ENCODE measurements at regions of chr12 and their contacts with region 1.

Region 1: DNA sequence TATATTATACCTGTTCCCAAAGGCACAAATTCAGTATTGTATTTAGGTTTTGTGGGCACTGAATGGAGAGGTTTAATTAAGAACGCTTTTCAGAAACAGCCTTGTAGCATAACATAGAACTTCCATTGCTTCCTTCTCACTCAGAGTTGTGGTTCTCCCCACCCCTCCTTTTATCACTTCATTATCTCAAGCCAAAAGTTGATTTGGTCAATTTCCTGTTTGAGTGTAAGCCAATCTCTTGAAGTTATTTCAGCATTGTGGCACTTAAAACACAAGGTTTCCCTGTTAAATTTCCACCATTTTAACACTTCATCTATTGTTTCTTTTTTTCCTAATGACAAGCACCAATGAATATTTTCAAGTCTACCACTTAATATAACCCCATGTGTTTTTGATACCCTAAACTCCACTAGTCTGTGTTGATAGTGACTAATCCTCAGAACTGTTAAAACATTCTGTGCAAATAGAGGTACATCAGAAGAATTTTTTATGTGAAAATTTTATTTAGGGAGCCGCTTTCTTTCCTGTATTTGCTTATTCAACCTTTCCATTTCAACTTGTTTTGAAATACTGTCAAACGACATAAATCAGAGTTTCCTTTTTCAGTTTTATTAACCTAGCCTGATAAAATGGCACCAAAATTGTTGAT is 340.1 kb downstream of the BCAT1 start:
- DNase-seq: no peak
- ATAC-seq: no peak
- H3K4me3 Mint-ChIP-seq: no peak overlapping the region
- H3K27ac Mint-ChIP-seq: no peak overlapping the region
- H3K4me1 Mint-ChIP-seq: peaks cover 25% of the 10 kb centered on the region
- H3K27me3 Mint-ChIP-seq: no peaks in the 10 kb centered on the region
- CTCF ChIP-seq: no peak

Region 2: GRCh38 chr12:24649634-24650033 is 40.9 kb after region 1 on chr12:
- CTCF ChIA-PET with region 1: no interaction called
- POLR2A ChIA-PET with region 1: no interaction called
- intact Hi-C with region 1: loop called (anchors 5 kb)
- DNase-seq: no peak
- ATAC-seq: no peak
- H3K4me3 Mint-ChIP-seq: no peak overlapping the region
- H3K27ac Mint-ChIP-seq: no peak overlapping the region
- H3K4me1 Mint-ChIP-seq: peaks cover 10% of the 10 kb centered on the region
- H3K27me3 Mint-ChIP-seq: no peaks in the 10 kb centered on the region
- CTCF ChIP-seq: no peak